ENCODE measurements at regions of chr4 and their contacts with region 1.

Region 1: GRCh38 chr4:56480691-56481090 is 13.3 kb downstream of the SRP72 start:
- DNase-seq: no peak
- ATAC-seq: no peak
- H3K4me3 Mint-ChIP-seq: no peak overlapping the region
- H3K27ac Mint-ChIP-seq: no peak overlapping the region
- H3K4me1 Mint-ChIP-seq: no peaks in the 10 kb centered on the region
- H3K27me3 Mint-ChIP-seq: no peaks in the 10 kb centered on the region
- CTCF ChIP-seq: no peak

Region 2: GRCh38 chr4:56414135-56414670 is 66.5 kb before region 1 on chr4:
- CTCF ChIA-PET with region 1: no interaction called
- POLR2A ChIA-PET with region 1: no interaction called
- DNase-seq: no peak
- ATAC-seq: no peak
- H3K4me3 Mint-ChIP-seq: no peak overlapping the region
- H3K27ac Mint-ChIP-seq: 0 out of 2 replicates have a peak overlapping the region, but pooled peaks have one; percentile 7
- H3K4me1 Mint-ChIP-seq: peaks cover 56% of the 10 kb centered on the region
- H3K27me3 Mint-ChIP-seq: no peaks in the 10 kb centered on the region
- CTCF ChIP-seq: no peak

Region 3: GRCh38 chr4:56513517-56513916 is 32.8 kb after region 1 on chr4:
- CTCF ChIA-PET with region 1: no interaction called
- POLR2A ChIA-PET with region 1: interaction called, 10 read pairs
- DNase-seq: no peak
- ATAC-seq: no peak
- H3K4me3 Mint-ChIP-seq: no peak overlapping the region
- H3K27ac Mint-ChIP-seq: no peak overlapping the region
- H3K4me1 Mint-ChIP-seq: no peaks in the 10 kb centered on the region
- H3K27me3 Mint-ChIP-seq: peaks cover 3% of the 10 kb centered on the region
- CTCF ChIP-seq: no peak